ENCODE measurements at regions of chr12 and their contacts with region 1.

Region 1: DNA sequence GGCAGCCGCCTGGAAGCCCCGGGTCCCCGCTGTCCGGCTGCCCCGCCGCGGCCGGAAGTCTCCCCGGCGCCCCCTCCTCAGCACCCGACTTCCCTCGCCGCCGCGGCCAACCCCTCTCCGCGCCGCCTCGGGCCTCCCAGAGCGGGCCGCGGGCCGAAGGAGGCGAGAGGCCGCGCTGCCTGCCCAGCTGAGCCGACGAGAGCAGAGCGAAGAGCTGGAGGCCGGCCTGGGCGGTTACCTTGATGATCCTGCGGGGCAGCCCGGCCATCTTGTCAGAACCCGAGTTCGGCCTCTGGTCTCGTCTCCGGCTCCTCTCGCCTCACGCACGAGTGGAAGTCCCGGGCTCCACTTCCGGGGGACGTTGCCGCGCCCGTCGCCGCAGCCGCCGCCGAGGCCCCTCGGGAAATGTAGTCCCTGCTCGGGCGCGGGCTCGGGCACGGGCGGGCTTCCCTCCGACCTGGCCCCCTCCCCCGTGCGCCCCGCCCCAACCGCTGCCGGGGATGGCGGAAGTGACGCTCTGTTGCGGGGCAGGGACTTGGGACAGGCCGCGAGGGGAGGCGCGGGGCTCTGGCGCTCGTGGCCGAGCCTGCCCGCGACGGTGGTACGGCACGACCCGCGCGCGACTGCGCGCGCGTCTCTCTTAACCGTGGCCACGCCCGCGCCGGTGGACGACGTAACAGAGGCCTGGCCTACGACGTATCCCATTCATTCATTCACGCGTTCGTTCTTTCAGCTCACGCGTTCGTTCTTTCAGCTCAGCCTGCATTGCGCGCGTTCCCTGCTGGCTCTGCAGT is at the start of gene UBE2N:
- DNase-seq: peak; percentile 94 to 100 (median 98)

Region 2: DNA sequence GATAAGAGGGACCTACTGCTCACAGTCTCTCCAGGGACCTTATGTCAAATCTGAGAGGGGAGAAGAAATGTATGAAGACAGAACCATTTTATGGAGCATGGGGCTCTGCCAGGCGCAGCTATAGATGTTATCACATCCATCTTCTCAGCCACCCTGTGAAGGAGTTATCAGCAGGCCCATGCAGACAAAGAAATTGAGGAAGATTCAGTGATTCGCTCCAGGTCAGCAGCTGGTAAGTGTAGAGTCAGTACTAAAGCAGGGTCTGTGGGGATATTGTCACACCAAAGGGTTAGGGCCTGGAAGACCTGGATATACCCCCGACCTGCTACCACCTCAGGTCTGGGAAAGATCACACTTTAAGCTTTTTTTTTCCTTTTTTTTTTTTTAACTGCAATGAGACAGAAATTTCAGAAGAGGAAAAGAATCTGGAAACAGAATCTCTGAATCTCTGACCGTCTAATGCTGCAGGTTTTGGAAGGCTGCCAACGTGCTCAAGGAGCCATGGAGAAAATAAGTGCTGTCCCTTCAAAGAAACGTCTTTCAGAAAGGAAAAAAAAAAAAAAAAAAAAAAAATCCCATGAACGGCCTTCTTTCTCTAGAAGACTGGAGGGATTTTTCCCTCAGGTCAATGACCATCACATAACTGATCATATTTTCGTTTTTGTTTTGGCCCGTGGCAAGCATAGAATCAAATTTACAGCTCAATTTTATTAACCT is 812.3 kb before region 1 on chr12:
- intact Hi-C with region 1: no loop called
- DNase-seq: peak in 1 of 10 donors; percentile 21

Region 3: GRCh38 chr12:93358058-93358457 is 83.8 kb before region 1 on chr12:
- intact Hi-C with region 1: no loop called
- DNase-seq: no peak

Region 4: DNA sequence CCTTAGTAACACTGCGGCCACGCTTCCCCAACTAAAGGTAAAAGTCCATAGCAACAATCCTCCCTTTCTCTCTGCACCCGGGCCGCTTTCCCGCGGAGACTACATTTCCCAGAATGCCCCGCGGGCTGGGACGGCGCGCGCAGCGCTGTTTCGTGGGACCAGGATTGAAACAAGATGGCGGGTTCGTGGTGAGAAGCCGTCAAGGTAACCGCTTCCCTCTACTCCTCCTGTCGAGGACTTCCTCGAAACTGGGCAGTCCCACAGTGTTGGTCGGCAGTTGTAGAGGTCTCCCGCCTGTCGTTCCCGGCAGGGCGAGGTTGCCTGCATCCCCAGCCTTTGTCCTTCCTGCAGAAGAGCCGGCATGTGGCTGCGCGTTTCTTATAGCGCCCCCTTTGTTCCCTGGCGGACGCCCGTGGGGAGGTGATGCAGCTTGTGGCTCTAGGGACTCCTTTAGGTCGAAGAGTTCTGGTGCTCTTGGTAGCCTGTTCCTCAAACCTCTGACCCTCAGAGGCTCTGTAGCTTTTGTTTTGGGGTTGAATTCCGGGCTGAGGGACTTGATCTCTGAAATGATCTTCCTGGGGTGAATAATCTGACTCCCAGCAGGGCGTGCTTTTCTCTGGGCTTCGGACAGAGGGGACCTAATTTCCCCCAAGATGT is 25.7 kb after region 1 on chr12 and contains the start of gene MRPL42:
- intact Hi-C with region 1: loop called (anchors 2 kb)
- DNase-seq: peak; percentile 80 to 98 (median 89)

Region 5: GRCh38 chr12:93677195-93678064 is 235.6 kb after region 1 on chr12 and contains the start of gene CRADD:
- intact Hi-C with region 1: loop called (anchors 2 kb)
- DNase-seq: peak; percentile 54 to 95 (median 70)

Measured in posterior cingulate gyrus (tissue), 11 donors.